ENCODE measurements at regions of chr2 and their contacts with region 1.

Region 1: DNA sequence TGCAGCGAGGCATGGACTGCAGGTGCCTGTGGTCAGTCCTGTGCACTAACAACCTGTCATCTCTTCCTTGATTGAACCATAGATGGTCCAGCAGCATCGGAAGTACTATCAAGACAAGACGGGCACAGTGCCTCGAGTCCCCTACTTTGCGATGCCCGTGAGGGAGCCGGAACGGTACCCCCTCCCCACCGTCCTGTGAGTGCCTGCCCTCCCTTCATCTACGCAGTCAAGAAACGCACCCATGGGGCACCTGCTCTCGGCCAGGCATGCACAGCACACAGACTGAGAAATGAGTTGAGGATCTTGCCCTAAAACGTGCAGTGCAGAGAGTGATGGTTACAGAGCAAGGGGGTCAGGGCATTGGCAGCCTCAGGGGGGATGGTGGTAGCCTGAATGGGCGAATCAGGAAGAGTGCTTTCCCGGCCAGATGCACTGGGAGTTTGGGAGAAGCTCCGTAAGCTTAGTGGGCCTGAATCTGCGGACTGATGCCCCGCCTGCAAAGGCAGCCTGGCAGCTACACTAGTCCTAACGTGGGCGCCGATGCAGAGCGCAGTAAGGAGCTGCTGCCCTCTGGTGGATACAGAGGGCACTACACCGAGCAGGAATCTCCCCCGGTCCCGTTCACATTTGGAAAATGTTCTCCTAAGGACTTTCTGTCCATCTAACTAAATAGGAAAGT is 63.6 kb downstream of the CIB4 start:
- DNase-seq: no peak
- ATAC-seq: peak; percentile 93
- H3K4me3 ChIP-seq: no peak overlapping the region
- H3K27ac ChIP-seq: no peak overlapping the region
- H3K4me1 ChIP-seq: no peaks in the 10 kb centered on the region
- H3K27me3 ChIP-seq: peaks cover 0 to 4% of the 10 kb centered on the region in 2 experiments; a peak in 2 of 4 replicates
- CTCF ChIP-seq: peak; percentile 94 to 97 (median 97)
- EP300 ChIP-seq: no peak
- POLR2A ChIP-seq: no peak
- RAD21 ChIP-seq: peak; percentile 82

Region 2: DNA sequence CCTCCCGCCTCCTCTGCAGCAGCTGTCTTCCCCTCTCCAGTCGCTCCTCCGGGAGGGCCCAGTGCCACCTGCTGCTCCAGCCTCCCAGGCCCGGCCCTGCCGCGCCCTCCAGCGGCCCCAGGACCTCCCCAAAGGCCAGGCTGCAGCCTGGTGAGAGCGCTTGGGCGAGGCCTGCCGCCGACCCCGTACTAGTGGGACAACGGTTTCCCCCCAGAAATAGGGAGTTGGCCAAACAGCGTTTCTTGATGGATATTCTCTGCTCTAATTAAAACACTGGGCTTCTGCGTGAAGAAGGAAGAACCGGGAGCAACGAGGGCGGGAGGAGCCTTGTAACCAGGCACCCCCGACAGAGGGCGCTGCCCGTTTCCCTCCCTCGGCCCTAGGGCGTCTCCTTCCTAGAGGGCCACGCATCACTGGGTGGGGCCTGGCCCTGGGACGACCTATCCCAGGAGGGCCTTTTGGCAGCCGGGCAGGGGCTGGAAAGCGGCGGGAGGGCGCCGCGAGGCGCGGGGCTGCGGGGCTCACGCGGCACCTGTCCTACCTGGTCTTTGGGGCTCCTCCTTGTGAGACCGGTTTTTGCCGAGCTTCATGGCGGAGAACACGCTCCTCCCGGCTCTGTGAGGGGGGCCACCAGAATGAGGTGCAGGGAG is 74.2 kb before region 1 on chr2:
- CTCF ChIA-PET with region 1: interaction called, 5 read pairs
- POLR2A ChIA-PET with region 1: no interaction called
- RAD21 ChIA-PET with region 1: no interaction called
- SMC1A ChIA-PET with region 1: no interaction called
- in situ Hi-C with region 1: no loop called
- intact Hi-C with region 1: loop called (anchors 5 kb)
- DNase-seq: no peak
- ATAC-seq: peak; percentile 98
- H3K4me3 ChIP-seq: peak overlapping the region; percentile 42; the same call in 1 of the 2 replicates
- H3K27ac ChIP-seq: no peak overlapping the region
- H3K4me1 ChIP-seq: no peaks in the 10 kb centered on the region; the same call in 1 of the 2 replicates
- H3K27me3 ChIP-seq: peaks cover 0 to 7% of the 10 kb centered on the region in 2 experiments; a peak in 3 of 4 replicates
- CTCF ChIP-seq: peak; percentile 75 to 88 (median 88)
- EP300 ChIP-seq: no peak
- POLR2A ChIP-seq: peak; percentile 48; the same call in 1 of the 2 replicates
- RAD21 ChIP-seq: peak; percentile 11; the same call in 1 of the 2 replicates

Region 3: DNA sequence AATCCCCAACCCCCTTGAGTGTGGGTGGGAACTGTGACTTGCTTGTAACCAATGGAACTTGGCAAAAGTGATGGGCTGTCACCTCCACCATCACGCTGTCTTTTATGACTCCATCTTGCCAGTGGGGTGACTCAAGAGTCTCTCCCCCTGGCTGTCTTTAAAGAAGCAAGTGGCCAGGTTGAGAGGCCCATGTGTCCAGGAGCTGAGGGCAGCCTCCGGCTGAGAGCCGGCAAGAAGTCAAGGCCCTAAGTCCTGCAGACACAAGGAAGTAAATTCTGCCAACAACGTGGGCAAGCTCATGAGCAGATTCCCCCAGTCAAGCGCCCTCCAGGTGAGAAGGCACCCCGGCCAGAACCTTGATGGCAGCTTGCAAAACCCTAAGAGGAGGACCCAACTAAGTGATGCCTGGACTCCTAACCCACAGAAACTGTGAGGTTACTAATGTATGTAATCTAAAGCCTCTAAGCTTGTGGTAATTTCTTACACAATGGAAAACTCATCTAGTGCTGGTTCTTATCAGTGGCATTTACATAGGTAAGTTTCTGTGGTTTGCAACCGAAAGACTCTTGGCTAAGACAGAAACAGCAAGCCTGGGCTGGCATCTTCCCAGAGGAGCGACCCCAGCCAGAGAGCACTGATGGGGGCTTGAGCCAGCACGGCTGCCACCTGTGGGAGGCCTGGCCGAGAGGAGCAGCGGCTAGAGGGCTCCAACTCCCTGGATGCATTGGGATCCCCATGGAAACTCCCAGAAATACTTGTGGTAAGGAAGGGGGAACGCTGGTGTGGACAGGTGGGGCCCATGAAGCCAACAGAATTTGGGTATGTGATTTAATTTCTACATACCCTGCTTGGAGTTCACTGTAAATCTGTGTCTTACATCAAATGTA is 14.3 kb after region 1 on chr2:
- CTCF ChIA-PET with region 1: interaction called, 13 read pairs
- POLR2A ChIA-PET with region 1: no interaction called
- RAD21 ChIA-PET with region 1: no interaction called
- SMC1A ChIA-PET with region 1: no interaction called
- in situ Hi-C with region 1: no loop called
- intact Hi-C with region 1: no loop called
- DNase-seq: no peak
- ATAC-seq: peak; percentile 85
- H3K4me3 ChIP-seq: no peak overlapping the region
- H3K27ac ChIP-seq: no peak overlapping the region
- H3K4me1 ChIP-seq: peaks cover 8% of the 10 kb centered on the region
- H3K27me3 ChIP-seq: peaks cover 0 to 15% of the 10 kb centered on the region in 2 experiments
- CTCF ChIP-seq: no peak
- EP300 ChIP-seq: no peak
- POLR2A ChIP-seq: no peak
- RAD21 ChIP-seq: no peak

Measured in GM12878 (cell line).